Activated CD8-positive, alpha-beta T cell treated with anti-CD3 and anti-CD28 coated beads for 36 hours (primary cell): ENCODE measurements at regions of chr19 and their contacts with region 1.

Region 1: DNA sequence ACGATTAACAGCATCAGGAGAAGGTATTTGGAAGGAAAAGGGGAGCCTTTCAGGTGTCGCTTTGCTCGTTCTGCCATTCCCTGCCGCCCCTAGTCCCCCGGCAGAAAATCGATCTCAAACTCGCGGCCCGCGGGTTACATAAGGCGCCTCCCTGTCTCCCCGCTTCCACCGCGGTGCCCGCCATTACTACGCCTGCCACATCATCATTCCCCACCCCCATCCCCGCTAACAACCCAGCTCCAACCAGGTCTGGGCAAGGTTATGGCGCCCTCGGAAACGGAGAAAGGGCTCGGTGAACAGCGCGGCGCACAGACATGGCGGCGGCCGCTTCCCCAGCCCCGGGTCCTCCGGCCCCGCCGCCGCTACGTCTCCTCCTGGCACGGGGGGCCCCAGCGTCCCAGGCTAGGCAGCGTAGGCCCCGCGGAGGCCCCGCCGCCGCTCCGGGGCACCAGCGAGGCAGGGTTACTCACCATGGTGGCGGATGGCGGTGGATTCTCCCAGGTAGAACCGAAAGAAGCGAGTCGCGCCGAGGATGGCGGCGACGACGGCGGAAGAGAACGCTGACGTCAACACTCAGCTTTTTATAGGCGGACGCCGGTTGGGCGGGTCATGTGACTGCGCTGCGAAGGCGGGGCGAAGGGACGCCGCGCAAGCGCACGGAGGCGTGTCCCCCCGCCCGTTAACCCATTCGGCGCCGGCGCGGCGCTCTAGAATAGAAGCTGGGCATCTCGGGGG is at the start of gene EEF2:
- DNase-seq: peak; percentile 88
- ATAC-seq: peak; percentile 49
- H3K4me3 Mint-ChIP-seq: peak within 1 kb of the TSS; percentile 94
- H3K27ac Mint-ChIP-seq: peak within 1 kb of the TSS; percentile 95
- H3K4me1 Mint-ChIP-seq: peaks cover 46% of the 10 kb centered on the region
- H3K27me3 Mint-ChIP-seq: no peaks in the 10 kb centered on the region
- CTCF ChIP-seq: no peak
- total RNA-seq, gene EEF2: 3,533 to 3,625 TPM

Region 2: GRCh38 chr19:3762501-3763459 is 222.3 kb before region 1 on chr19 and contains the start of gene MRPL54:
- CTCF ChIA-PET with region 1: interaction called, 9 read pairs
- POLR2A ChIA-PET with region 1: interaction called, 10 read pairs
- intact Hi-C with region 1: no loop called
- DNase-seq: peak; percentile 99
- ATAC-seq: peak; percentile 87
- H3K4me3 Mint-ChIP-seq: peak within 1 kb of the TSS; percentile 99
- H3K27ac Mint-ChIP-seq: peak within 1 kb of the TSS; percentile 99
- H3K4me1 Mint-ChIP-seq: peaks cover 39% of the 10 kb centered on the region
- H3K27me3 Mint-ChIP-seq: no peaks in the 10 kb centered on the region
- CTCF ChIP-seq: no peak
- total RNA-seq, gene MRPL54: 47.4 to 50.9 TPM

Region 3: GRCh38 chr19:3923912-3924311 is 61.2 kb before region 1 on chr19:
- CTCF ChIA-PET with region 1: no interaction called
- POLR2A ChIA-PET with region 1: no interaction called
- intact Hi-C with region 1: no loop called
- DNase-seq: no peak
- ATAC-seq: no peak
- H3K4me3 Mint-ChIP-seq: no peak overlapping the region
- H3K27ac Mint-ChIP-seq: no peak overlapping the region
- H3K4me1 Mint-ChIP-seq: no peaks in the 10 kb centered on the region
- H3K27me3 Mint-ChIP-seq: peaks cover 1% of the 10 kb centered on the region
- CTCF ChIP-seq: no peak

Region 4: DNA sequence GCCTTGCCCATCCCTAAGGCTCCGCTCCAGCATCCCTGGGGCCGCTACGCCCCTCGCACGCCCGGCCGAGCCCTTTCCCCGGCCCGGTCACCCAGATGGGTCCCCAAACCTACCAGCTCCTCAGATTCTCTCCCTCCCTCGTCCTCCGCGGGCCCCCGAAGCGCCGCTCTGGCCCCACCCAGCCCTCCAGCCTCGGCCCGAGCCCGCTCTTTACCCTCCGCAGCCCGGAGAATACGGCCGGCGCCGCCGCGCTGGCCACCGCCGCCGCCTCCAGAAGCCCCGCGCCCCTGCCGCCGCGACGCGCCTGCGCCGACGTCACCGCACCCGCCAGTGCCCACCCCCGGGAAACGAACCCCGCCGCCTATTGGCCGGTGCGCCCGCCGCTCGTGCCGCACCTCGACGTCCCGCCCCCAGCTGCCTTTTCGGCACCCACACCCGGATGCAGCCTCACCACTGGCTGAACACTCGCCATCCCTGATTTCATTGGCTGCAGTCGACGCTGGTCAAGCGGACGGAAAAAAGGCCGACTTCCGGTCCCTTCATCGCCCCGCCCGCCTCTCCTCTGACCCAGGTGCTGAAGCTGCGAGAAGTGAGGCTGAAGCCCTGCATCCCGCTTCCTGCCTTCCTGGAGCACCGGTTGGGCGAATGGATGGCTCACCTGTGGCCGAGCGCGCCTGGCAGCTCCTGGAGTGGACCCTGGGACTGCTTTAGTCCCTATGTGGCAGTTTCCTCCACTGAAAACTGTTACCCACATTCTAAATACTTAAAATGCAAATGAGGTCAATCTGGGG is 14.1 kb before region 1 on chr19 and contains the start of gene DAPK3:
- CTCF ChIA-PET with region 1: interaction called, 16 read pairs
- POLR2A ChIA-PET with region 1: interaction called, 131 read pairs
- intact Hi-C with region 1: no loop called
- DNase-seq: peak; percentile 96
- ATAC-seq: peak; percentile 95
- H3K4me3 Mint-ChIP-seq: peak within 1 kb of the TSS; percentile 87
- H3K27ac Mint-ChIP-seq: peak within 1 kb of the TSS; percentile 78
- H3K4me1 Mint-ChIP-seq: peaks cover 24% of the 10 kb centered on the region
- H3K27me3 Mint-ChIP-seq: no peaks in the 10 kb centered on the region
- CTCF ChIP-seq: no peak
- total RNA-seq, gene DAPK3: 27.2 to 27.5 TPM

Region 5: DNA sequence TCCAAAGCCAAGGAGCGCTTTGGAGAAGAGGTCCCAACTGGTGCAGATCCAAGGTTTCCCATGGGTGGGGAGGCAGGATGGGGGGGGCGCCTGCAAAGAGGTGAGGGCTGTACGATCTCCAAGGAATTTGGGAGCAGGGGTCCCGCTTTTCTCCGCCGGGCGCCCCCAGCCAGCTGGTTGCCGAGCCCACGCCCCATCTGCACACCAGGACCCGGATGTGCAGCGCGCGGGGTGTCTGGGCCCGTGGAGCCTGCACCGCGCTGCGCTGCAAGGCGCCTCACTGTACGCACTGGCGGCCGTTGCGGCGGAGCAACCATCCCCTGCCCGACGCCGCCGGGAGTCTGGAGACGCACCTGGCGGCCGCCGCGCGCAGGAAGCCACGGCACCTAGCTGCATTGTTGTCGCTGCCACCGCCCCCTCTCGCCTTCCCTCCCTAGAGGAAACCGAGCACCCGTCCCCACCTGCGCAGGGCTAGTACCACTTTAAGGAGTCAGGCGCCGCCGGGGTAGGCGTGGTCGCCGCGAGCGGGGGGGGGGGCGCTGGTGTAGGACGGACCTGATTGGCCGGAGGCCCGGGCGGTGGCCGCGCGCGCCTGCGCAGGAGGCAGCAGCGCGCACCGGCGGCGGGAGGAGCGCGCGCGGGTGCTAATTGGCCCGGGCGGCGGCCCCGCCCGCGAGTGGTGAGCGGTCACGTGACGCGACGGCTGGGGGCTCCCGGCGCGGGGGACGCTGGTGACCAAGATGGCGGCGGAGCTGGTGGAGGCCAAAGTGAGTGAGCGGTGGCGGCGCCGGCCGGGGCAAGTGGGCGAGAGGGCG is 22.2 kb after region 1 on chr19 and contains the start of gene PIAS4:
- CTCF ChIA-PET with region 1: interaction called, 11 read pairs
- POLR2A ChIA-PET with region 1: interaction called, 30 read pairs
- intact Hi-C with region 1: no loop called
- DNase-seq: peak; percentile 97
- ATAC-seq: peak; percentile 95
- H3K4me3 Mint-ChIP-seq: peak within 1 kb of the TSS; percentile 81
- H3K27ac Mint-ChIP-seq: peak within 1 kb of the TSS; percentile 78
- H3K4me1 Mint-ChIP-seq: peaks cover 30% of the 10 kb centered on the region
- H3K27me3 Mint-ChIP-seq: no peaks in the 10 kb centered on the region
- CTCF ChIP-seq: no peak
- total RNA-seq, gene PIAS4: 22.2 TPM

Region 6: DNA sequence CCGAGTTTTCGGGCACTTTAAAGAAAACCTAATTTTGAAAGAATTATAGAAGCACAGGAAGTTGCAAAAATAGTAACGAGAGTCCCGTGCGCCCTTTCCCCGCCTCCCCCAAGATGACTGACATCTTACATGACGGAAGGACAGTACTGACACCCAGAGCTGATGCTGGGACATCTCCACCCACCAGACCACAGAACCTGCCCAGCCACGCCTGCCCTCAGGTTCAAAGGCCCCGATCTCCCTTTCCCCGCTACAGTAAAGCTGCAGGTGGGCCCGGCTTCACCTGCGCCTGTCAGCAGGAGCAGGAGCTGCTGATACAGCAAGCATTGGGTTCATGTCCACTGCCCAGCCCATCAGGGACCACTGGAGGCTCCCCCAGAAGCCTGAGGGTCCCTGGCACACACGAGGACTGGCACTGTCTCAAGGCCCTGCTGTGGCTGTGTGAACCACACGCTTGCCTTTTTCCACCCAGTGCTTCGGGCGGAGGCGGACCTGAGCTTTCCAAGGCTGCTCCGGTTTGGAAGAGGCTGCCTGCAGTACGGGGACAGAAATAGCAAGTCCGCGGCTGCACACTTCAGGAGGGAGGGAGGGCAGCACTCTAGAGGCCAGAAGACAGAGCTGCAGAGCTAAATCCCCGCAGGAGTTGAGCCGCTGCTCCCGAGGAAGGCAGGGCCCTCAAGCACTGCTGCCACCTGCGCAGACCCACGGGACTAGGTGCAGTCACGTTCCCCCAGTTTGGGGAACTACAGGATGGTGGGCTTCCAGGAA is 130.2 kb after region 1 on chr19:
- CTCF ChIA-PET with region 1: interaction called, 7 read pairs
- POLR2A ChIA-PET with region 1: interaction called, 4 read pairs
- intact Hi-C with region 1: loop called (anchors 5 kb)
- DNase-seq: peak; percentile 85
- ATAC-seq: peak; percentile 96
- H3K4me3 Mint-ChIP-seq: peak overlapping the region; percentile 8
- H3K27ac Mint-ChIP-seq: peak overlapping the region; percentile 73
- H3K4me1 Mint-ChIP-seq: peaks cover 36% of the 10 kb centered on the region
- H3K27me3 Mint-ChIP-seq: no peaks in the 10 kb centered on the region
- CTCF ChIP-seq: no peak

Region 7: GRCh38 chr19:4199699-4200293 is 214.7 kb after region 1 on chr19:
- CTCF ChIA-PET with region 1: interaction called, 4 read pairs
- POLR2A ChIA-PET with region 1: interaction called, 12 read pairs
- intact Hi-C with region 1: no loop called
- DNase-seq: no peak
- ATAC-seq: no peak
- H3K4me3 Mint-ChIP-seq: no peak overlapping the region
- H3K27ac Mint-ChIP-seq: no peak overlapping the region
- H3K4me1 Mint-ChIP-seq: peaks cover 12% of the 10 kb centered on the region
- H3K27me3 Mint-ChIP-seq: peaks cover 36% of the 10 kb centered on the region
- CTCF ChIP-seq: no peak